ENCODE measurements at regions of chr16 and their contacts with region 1.

Region 1: GRCh38 chr16:22297114-22297878 is at the start of gene POLR3E:
- DNase-seq: peak; percentile 98 to 100 (median 100)
- ATAC-seq: peak; percentile 94
- H3K4me3 ChIP-seq: peak within 1 kb of the TSS; percentile 66
- H3K4me3 Mint-ChIP-seq: peak within 1 kb of the TSS; percentile 90 to 98 (median 95)
- H3K27ac ChIP-seq: peak within 1 kb of the TSS; percentile 99
- H3K27ac Mint-ChIP-seq: peak within 1 kb of the TSS; percentile 95 to 100 (median 99)
- H3K4me1 ChIP-seq: peaks cover 14 to 18% of the 10 kb centered on the region in 2 donors
- H3K4me1 Mint-ChIP-seq: peaks cover 27 to 49% (median 48%) of the 10 kb centered on the region in 7 donors
- H3K27me3 ChIP-seq: no peaks in the 10 kb centered on the region
- H3K27me3 Mint-ChIP-seq: peaks cover 0 to 8% (median 0%) of the 10 kb centered on the region in 5 donors
- total RNA-seq, gene POLR3E: 60.1 to 232 (median 112) TPM

Region 2: GRCh38 chr16:21501909-21502667 is 795.2 kb before region 1 on chr16:
- CTCF ChIA-PET with region 1: no interaction called
- POLR2A ChIA-PET with region 1: no interaction called
- intact Hi-C with region 1: loop called in 1 of 2 experiments (anchors 10 kb)
- DNase-seq: peak; percentile 85 to 99 (median 96)
- ATAC-seq: peak; percentile 90
- H3K4me3 ChIP-seq: peak overlapping the region; percentile 91
- H3K4me3 Mint-ChIP-seq: peak overlapping the region; percentile 76 to 94 (median 86)
- H3K27ac ChIP-seq: peak overlapping the region; percentile 92
- H3K27ac Mint-ChIP-seq: peak overlapping the region; percentile 71 to 93 (median 89)
- H3K4me1 ChIP-seq: peaks cover 4 to 7% of the 10 kb centered on the region in 2 donors
- H3K4me1 Mint-ChIP-seq: peaks cover 11 to 26% (median 16%) of the 10 kb centered on the region in 7 donors
- H3K27me3 ChIP-seq: no peaks in the 10 kb centered on the region
- H3K27me3 Mint-ChIP-seq: no peaks in the 10 kb centered on the region

Region 3: DNA sequence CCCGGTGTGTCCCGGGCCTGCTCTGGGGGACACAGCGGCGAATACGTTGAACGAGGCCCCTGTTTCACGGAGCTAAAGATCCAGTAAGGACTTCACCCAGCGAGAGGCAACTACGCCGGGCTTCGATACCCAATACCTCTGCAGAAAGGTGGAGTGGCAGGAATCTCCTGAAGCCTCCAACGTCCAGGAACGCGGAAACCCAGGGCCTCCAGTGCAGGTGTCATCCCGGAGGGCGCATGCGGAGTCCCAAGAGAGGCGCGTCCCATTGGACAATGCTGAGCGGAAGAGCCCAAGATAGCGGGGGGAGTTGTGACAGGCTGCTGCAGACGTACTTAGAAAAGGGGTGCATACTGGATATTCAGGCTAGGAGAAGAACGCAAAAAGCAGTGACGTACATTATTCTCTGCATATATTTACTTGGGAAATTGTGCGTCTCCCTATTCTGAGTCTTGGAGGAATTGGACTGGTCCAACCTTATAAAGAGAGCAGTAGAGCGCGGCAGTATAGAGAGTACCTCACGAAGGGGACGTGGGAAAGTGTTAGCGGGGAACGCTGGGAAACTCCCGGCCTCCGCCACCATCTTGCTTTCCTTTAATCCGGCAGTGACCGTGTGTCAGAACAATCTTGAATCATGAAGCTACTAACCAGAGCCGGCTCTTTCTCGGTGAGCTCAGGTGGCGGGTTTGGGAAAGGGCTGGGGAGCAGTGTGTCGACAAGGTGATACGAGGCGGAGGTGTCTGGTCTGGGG is 344.3 kb before region 1 on chr16 and contains the start of gene UQCRC2:
- CTCF ChIA-PET with region 1: no interaction called
- POLR2A ChIA-PET with region 1: no interaction called
- intact Hi-C with region 1: loop called (anchors 1 kb)
- DNase-seq: peak; percentile 76 to 92 (median 89)
- ATAC-seq: peak; percentile 94
- H3K4me3 ChIP-seq: peak within 1 kb of the TSS; percentile 81
- H3K4me3 Mint-ChIP-seq: peak within 1 kb of the TSS; percentile 94 to 100 (median 99)
- H3K27ac ChIP-seq: peak within 1 kb of the TSS; percentile 97
- H3K27ac Mint-ChIP-seq: peak within 1 kb of the TSS; percentile 96 to 99 (median 98)
- H3K4me1 ChIP-seq: peaks cover 30 to 33% of the 10 kb centered on the region in 2 donors
- H3K4me1 Mint-ChIP-seq: peaks cover 34 to 86% (median 68%) of the 10 kb centered on the region in 7 donors
- H3K27me3 ChIP-seq: no peaks in the 10 kb centered on the region
- H3K27me3 Mint-ChIP-seq: no peaks in the 10 kb centered on the region
- total RNA-seq, gene UQCRC2: 158 to 227 (median 180) TPM

Region 4: DNA sequence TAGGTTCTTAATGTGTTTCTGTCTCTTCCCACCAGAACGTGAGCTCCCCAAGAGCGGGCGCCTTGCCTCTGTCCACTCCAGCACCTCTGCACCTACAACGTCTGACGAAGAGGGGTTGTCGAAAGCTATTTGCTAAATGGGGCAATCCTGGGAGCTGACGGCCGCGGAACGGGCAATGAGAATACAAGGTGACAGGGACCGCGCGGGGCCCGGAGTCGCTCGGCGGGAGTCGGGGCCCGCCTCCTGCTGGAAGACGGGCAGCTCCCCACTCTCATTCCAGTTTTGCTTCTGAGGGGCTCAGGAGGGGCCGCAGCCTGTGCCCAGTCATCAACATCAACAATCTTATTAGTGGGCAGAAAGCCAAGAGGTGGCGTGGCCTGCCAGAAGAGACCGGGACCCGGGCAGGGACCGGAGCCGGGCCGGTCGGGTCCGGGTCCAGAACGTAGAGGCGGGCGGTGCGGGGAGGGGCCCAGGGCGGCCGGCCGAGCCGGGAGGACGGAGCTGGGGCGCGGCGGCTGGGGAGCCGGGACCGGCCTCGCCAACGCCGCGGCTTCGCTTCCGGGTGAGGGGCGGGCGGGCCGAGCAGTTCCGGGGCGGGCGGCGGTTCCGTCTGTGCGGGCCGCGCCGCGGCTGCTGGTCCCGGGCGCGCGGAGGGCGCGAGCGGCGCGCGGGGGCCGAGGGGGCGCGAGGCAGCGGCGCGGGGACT is 289.6 kb before region 1 on chr16 and contains the start of gene MOSMO:
- CTCF ChIA-PET with region 1: interaction called, 7 read pairs
- POLR2A ChIA-PET with region 1: interaction called, 5 read pairs
- intact Hi-C with region 1: loop called in 1 of 2 experiments (anchors 1 kb)
- DNase-seq: peak; percentile 38 to 78 (median 59)
- ATAC-seq: peak; percentile 94
- H3K4me3 ChIP-seq: peak within 1 kb of the TSS; percentile 79
- H3K4me3 Mint-ChIP-seq: peak within 1 kb of the TSS; percentile 85 to 92 (median 89)
- H3K27ac ChIP-seq: peak within 1 kb of the TSS; percentile 93
- H3K27ac Mint-ChIP-seq: peak within 1 kb of the TSS; percentile 64 to 91 (median 89)
- H3K4me1 ChIP-seq: peaks cover 8 to 20% of the 10 kb centered on the region in 2 donors
- H3K4me1 Mint-ChIP-seq: peaks cover 19 to 58% (median 51%) of the 10 kb centered on the region in 7 donors
- H3K27me3 ChIP-seq: no peaks in the 10 kb centered on the region
- H3K27me3 Mint-ChIP-seq: peaks cover 0 to 12% (median 0%) of the 10 kb centered on the region in 5 donors
- total RNA-seq, gene MOSMO: 8.5 to 24.0 (median 13.5) TPM

Region 5: GRCh38 chr16:22183901-22184614 is 113.2 kb before region 1 on chr16:
- CTCF ChIA-PET with region 1: interaction called, 11 read pairs
- POLR2A ChIA-PET with region 1: interaction called, 167 read pairs
- intact Hi-C with region 1: loop called in 1 of 2 experiments (anchors 1 kb)
- DNase-seq: peak in 3 of 9 donors; percentile 19 to 29 (median 29)
- ATAC-seq: peak; percentile 33
- H3K4me3 ChIP-seq: no peak overlapping the region
- H3K4me3 Mint-ChIP-seq: no peak overlapping the region
- H3K27ac ChIP-seq: no peak overlapping the region
- H3K27ac Mint-ChIP-seq: peak overlapping the region in 1 of 9 donors; percentile 36
- H3K4me1 ChIP-seq: peaks cover 11 to 16% of the 10 kb centered on the region in 2 donors
- H3K4me1 Mint-ChIP-seq: peaks cover 11 to 18% (median 13%) of the 10 kb centered on the region in 7 donors
- H3K27me3 ChIP-seq: no peaks in the 10 kb centered on the region
- H3K27me3 Mint-ChIP-seq: peaks cover 0 to 3% (median 0%) of the 10 kb centered on the region in 5 donors

Region 6: GRCh38 chr16:22240023-22240710 is 57.1 kb before region 1 on chr16:
- CTCF ChIA-PET with region 1: no interaction called
- POLR2A ChIA-PET with region 1: interaction called, 3 read pairs
- intact Hi-C with region 1: loop called (anchors 1 to 2 kb)
- DNase-seq: no peak
- ATAC-seq: no peak
- H3K4me3 ChIP-seq: no peak overlapping the region
- H3K4me3 Mint-ChIP-seq: peak overlapping the region in 4 of 10 donors; percentile 18 to 35 (median 22)
- H3K27ac ChIP-seq: no peak overlapping the region
- H3K27ac Mint-ChIP-seq: peak overlapping the region; percentile 12 to 95 (median 77)
- H3K4me1 ChIP-seq: peaks cover 12 to 30% of the 10 kb centered on the region in 2 donors
- H3K4me1 Mint-ChIP-seq: peaks cover 18 to 39% (median 33%) of the 10 kb centered on the region in 7 donors
- H3K27me3 ChIP-seq: no peaks in the 10 kb centered on the region
- H3K27me3 Mint-ChIP-seq: no peaks in the 10 kb centered on the region

Region 7: GRCh38 chr16:22366889-22367288 is 69.6 kb after region 1 on chr16:
- CTCF ChIA-PET with region 1: no interaction called
- POLR2A ChIA-PET with region 1: no interaction called
- intact Hi-C with region 1: no loop called
- DNase-seq: no peak
- ATAC-seq: no peak
- H3K4me3 ChIP-seq: no peak overlapping the region
- H3K4me3 Mint-ChIP-seq: peak overlapping the region; percentile 17 to 71 (median 44)
- H3K27ac ChIP-seq: no peak overlapping the region
- H3K27ac Mint-ChIP-seq: peak overlapping the region in 8 of 9 donors; percentile 15 to 88 (median 62)
- H3K4me1 ChIP-seq: peaks cover 25 to 52% of the 10 kb centered on the region in 2 donors
- H3K4me1 Mint-ChIP-seq: peaks cover 30 to 93% (median 83%) of the 10 kb centered on the region in 7 donors
- H3K27me3 ChIP-seq: no peaks in the 10 kb centered on the region
- H3K27me3 Mint-ChIP-seq: no peaks in the 10 kb centered on the region

Measured in naive thymus-derived CD4-positive, alpha-beta T cell (primary cell).